ENCODE measurements at regions of chr11 and their contacts with region 1.

Region 1: GRCh38 chr11:123640677-123641494 is 13.5 kb downstream of the SCN3B start:
- DNase-seq: peak; percentile 54
- H3K4me3 Mint-ChIP-seq: no peak overlapping the region
- H3K27ac Mint-ChIP-seq: no peak overlapping the region
- H3K4me1 Mint-ChIP-seq: peaks cover 5% of the 10 kb centered on the region
- H3K27me3 Mint-ChIP-seq: peaks cover 37% of the 10 kb centered on the region
- CTCF ChIP-seq: peak; percentile 97

Region 2: DNA sequence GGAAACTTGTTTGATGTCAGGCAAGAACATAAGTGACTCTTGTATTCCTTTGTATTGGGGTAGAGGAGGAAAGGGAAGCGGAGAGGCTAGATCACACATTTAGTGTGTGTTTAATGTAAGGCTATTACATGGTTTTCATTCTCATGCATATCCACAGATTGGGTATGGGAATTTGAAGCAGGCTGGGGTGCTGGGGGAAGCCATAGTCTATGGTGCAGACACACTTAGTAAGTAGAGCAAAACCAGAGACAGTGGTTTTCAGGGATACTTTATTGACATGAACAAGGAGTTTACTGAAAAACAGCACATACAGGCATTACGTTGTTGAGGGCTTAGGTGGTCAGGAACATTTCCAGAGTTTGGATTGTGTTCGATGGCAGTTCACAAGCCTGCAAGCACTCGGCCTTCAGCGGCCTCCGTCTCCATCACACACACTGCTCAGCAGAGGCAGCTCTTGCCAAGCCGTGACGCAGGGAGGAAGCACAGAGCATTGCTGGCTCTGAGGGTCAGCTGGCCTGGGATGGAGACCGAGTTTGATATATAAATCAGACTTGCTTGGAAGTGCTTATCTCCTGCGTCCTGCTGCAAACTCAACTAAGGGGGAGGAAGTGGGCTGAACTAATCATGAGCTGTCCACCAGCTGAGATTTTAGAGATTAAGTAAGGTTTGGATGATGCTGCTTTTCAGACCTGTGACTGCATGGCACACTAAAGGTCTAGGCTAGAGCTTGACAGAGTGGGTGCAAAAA is 11.8 kb before region 1 on chr11:
- CTCF ChIA-PET with region 1: interaction called, 13 read pairs
- POLR2A ChIA-PET with region 1: interaction called, 3 read pairs
- intact Hi-C with region 1: no loop called
- DNase-seq: no peak
- H3K4me3 Mint-ChIP-seq: no peak overlapping the region
- H3K27ac Mint-ChIP-seq: no peak overlapping the region
- H3K4me1 Mint-ChIP-seq: no peaks in the 10 kb centered on the region
- H3K27me3 Mint-ChIP-seq: peaks cover 40% of the 10 kb centered on the region
- CTCF ChIP-seq: no peak

Region 3: DNA sequence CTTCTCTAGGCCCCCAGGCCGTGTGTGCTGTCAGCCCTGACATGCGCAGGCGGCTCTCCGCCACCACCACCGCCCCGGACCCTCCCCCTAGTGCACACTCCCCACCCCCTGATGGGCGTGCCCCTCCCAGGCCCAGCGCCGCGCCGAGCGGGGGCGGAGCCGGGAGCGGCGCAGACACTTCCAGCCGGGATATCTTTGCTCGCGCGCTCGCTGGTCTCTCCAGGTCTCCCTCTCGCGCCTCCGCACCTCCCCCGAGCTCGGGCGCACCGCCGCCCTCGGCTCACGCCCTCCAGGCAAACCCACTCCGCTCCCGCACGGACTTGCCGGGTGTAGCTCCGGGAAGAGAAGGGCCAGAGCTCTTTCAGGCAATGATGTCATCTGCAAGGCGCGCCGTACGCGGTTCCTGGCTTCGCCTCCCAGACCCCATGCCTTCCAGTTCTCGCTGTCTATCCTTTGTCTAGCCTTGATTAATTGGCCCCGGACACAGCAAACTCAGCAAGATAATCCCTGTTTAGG is 13.7 kb after region 1 on chr11 and contains the start of gene SCN3B:
- CTCF ChIA-PET with region 1: interaction called, 10 read pairs
- POLR2A ChIA-PET with region 1: interaction called, 4 read pairs
- intact Hi-C with region 1: no loop called
- DNase-seq: peak; percentile 67
- H3K4me3 Mint-ChIP-seq: peak within 1 kb of the TSS; percentile 68
- H3K27ac Mint-ChIP-seq: no peak within 1 kb of the TSS
- H3K4me1 Mint-ChIP-seq: no peaks in the 10 kb centered on the region
- H3K27me3 Mint-ChIP-seq: peaks cover 39% of the 10 kb centered on the region
- CTCF ChIP-seq: no peak
- total RNA-seq, gene SCN3B: 1.2 and 3.3 TPM in 2 replicates

Region 4: GRCh38 chr11:124194698-124195410 is 554.0 kb after region 1 on chr11:
- CTCF ChIA-PET with region 1: no interaction called
- POLR2A ChIA-PET with region 1: no interaction called
- intact Hi-C with region 1: loop called (anchors 10 kb)
- DNase-seq: peak; percentile 87
- H3K4me3 Mint-ChIP-seq: no peak overlapping the region
- H3K27ac Mint-ChIP-seq: no peak overlapping the region
- H3K4me1 Mint-ChIP-seq: peaks cover 4% of the 10 kb centered on the region
- H3K27me3 Mint-ChIP-seq: peaks cover 28% of the 10 kb centered on the region
- CTCF ChIP-seq: peak; percentile 78

Measured in MCF 10A (cell line).